ENCODE measurements at regions of chr14 and their contacts with region 1.

Region 1: DNA sequence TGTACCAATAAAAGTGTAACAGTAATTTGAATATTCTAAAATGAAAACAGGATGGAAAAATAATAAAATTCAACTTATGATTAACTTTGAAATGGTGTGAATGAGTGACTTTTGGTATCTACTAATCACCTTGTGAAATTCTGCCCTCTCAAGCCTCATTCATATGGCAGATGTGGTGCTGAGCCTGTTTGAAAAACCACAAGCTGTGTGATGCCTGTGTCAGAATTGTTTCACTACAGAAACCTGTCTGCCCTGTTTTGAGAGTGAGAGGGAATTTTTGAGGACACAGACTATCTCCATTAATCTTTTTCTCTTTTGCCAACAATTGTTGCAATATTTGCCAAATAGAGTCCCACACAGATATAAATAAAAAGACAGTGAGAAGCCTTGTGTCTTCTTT is 3.9 kb upstream of the RNU6-7 start:
- DNase-seq: no peak
- ATAC-seq: no peak
- H3K4me3 ChIP-seq: no peak overlapping the region
- H3K27ac ChIP-seq: no peak overlapping the region
- H3K4me1 ChIP-seq: peaks cover 9% of the 10 kb centered on the region
- H3K27me3 ChIP-seq: no peaks in the 10 kb centered on the region; a peak in 1 of 5 replicates
- CTCF ChIP-seq: no peak
- EP300 ChIP-seq: no peak
- POLR2A ChIP-seq: no peak
- RAD21 ChIP-seq: no peak

Region 2: DNA sequence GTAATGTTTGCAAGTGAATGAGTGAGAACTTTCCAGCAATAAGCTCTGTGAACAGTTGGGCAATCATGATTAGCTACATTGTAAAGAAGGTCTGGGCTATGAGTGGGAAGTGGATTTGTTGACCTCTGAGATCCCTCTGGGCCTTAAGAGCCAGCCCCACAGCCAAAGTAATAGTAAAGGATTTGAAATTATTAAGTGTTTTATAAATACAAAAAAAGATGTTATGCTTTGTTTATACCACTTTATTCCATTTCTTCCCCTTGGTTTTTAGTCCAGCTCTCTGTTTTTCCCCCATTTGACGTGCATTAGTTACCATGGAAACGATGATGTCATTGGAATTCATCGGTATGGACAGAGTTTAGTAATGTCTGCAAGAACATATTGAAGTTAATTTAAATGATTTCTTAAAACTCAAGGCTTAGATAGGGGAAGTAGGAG is 368.5 kb before region 1 on chr14:
- CTCF ChIA-PET with region 1: no interaction called
- POLR2A ChIA-PET with region 1: no interaction called
- in situ Hi-C with region 1: no loop called
- intact Hi-C with region 1: no loop called
- DNase-seq: no peak
- ATAC-seq: no peak
- H3K4me3 ChIP-seq: no peak overlapping the region
- H3K27ac ChIP-seq: no peak overlapping the region
- H3K4me1 ChIP-seq: no peaks in the 10 kb centered on the region
- H3K27me3 ChIP-seq: no peaks in the 10 kb centered on the region
- CTCF ChIP-seq: no peak
- EP300 ChIP-seq: no peak
- POLR2A ChIP-seq: no peak
- RAD21 ChIP-seq: no peak

Region 3: GRCh38 chr14:32038876-32039275 is 159.0 kb before region 1 on chr14:
- CTCF ChIA-PET with region 1: no interaction called
- POLR2A ChIA-PET with region 1: no interaction called
- in situ Hi-C with region 1: no loop called
- intact Hi-C with region 1: no loop called
- DNase-seq: no peak
- ATAC-seq: no peak
- H3K4me3 ChIP-seq: no peak overlapping the region
- H3K27ac ChIP-seq: no peak overlapping the region
- H3K4me1 ChIP-seq: peaks cover 9% of the 10 kb centered on the region
- H3K27me3 ChIP-seq: no peaks in the 10 kb centered on the region
- CTCF ChIP-seq: no peak
- EP300 ChIP-seq: no peak
- POLR2A ChIP-seq: no peak
- RAD21 ChIP-seq: no peak

Region 4: GRCh38 chr14:32142341-32142740 is 55.6 kb before region 1 on chr14:
- CTCF ChIA-PET with region 1: no interaction called
- POLR2A ChIA-PET with region 1: no interaction called
- in situ Hi-C with region 1: no loop called
- intact Hi-C with region 1: loop called (anchors 5 kb)
- DNase-seq: no peak
- ATAC-seq: peak; percentile 40; the same call in 2 of the 3 replicates
- H3K4me3 ChIP-seq: no peak overlapping the region
- H3K27ac ChIP-seq: no peak overlapping the region
- H3K4me1 ChIP-seq: peaks cover 11% of the 10 kb centered on the region
- H3K27me3 ChIP-seq: no peaks in the 10 kb centered on the region
- CTCF ChIP-seq: no peak
- EP300 ChIP-seq: no peak
- POLR2A ChIP-seq: no peak
- RAD21 ChIP-seq: no peak

Region 5: GRCh38 chr14:32167907-32168306 is 30.0 kb before region 1 on chr14:
- CTCF ChIA-PET with region 1: no interaction called
- POLR2A ChIA-PET with region 1: no interaction called
- in situ Hi-C with region 1: no loop called
- intact Hi-C with region 1: loop called (anchors 5 kb)
- DNase-seq: no peak
- ATAC-seq: no peak
- H3K4me3 ChIP-seq: no peak overlapping the region
- H3K27ac ChIP-seq: no peak overlapping the region
- H3K4me1 ChIP-seq: no peaks in the 10 kb centered on the region
- H3K27me3 ChIP-seq: no peaks in the 10 kb centered on the region
- CTCF ChIP-seq: no peak
- EP300 ChIP-seq: no peak
- POLR2A ChIP-seq: no peak
- RAD21 ChIP-seq: no peak

Measured in HepG2 (cell line).